Upper lobe of right lung (tissue), 1 donor: ENCODE measurements at regions of chr1 and their contacts with region 1.

Region 1: DNA sequence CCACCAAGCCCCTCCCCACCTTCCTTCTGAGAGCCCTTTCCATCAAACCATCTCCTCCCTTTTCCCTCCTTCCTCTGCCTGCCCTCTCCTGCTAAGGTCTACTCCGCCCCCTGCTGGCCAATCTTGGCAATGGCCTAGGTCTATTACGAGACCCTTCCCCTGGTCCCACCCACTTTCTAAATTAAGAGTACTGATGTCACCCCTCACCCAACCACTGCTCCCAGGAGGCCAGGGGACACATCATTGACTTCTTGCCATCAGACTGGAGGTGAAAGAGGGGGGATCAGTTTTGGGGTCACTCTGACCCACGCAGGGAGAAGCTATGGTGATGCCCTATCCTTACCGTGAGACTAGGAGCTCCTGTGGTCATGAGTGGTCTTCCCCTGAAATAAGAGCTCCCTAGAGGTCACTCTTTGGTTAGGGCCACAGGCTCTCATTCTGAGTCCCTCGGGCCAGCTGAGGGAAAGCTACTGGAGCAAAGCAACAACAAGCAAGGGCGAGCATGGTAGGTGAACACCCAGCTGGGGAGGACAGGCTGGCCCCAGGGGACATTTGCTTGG is 34.6 kb upstream of the S100A7 start:
- DNase-seq: peak; percentile 86
- ATAC-seq: peak; percentile 90
- H3K4me3 ChIP-seq: no peak overlapping the region
- H3K27ac ChIP-seq: no peak overlapping the region
- H3K4me1 ChIP-seq: no peaks in the 10 kb centered on the region
- H3K27me3 ChIP-seq: no peaks in the 10 kb centered on the region
- CTCF ChIP-seq: peak; percentile 91

Region 2: GRCh38 chr1:153220606-153221303 is 274.3 kb before region 1 on chr1:
- intact Hi-C with region 1: no loop called
- DNase-seq: no peak
- ATAC-seq: no peak
- H3K4me3 ChIP-seq: no peak overlapping the region
- H3K27ac ChIP-seq: no peak overlapping the region
- H3K4me1 ChIP-seq: no peaks in the 10 kb centered on the region
- H3K27me3 ChIP-seq: no peaks in the 10 kb centered on the region
- CTCF ChIP-seq: no peak

Region 3: DNA sequence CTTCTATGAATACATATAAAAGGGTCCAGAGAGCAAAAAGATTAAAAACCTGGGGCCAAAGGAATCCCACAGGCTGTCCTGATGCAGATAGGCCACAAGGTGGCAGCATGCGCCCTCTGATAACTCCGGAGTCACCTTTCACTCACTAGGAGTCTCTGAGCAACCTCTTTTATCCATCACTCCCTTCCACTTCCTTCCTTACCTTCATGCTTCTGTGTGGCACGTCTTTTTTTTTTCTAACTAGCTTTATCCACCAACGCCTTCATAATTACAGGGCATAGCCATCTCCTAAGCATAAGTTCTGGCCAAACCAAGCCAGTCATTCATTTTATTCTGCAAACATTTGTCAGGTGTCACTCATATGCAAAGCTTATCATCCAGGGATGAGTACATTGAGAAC is 142.5 kb before region 1 on chr1:
- intact Hi-C with region 1: loop called (anchors 5 kb)
- DNase-seq: peak; percentile 79
- ATAC-seq: peak; percentile 83
- H3K4me3 ChIP-seq: no peak overlapping the region
- H3K27ac ChIP-seq: no peak overlapping the region
- H3K4me1 ChIP-seq: peaks cover 9% of the 10 kb centered on the region
- H3K27me3 ChIP-seq: peaks cover 27% of the 10 kb centered on the region
- CTCF ChIP-seq: peak; percentile 95

Region 4: DNA sequence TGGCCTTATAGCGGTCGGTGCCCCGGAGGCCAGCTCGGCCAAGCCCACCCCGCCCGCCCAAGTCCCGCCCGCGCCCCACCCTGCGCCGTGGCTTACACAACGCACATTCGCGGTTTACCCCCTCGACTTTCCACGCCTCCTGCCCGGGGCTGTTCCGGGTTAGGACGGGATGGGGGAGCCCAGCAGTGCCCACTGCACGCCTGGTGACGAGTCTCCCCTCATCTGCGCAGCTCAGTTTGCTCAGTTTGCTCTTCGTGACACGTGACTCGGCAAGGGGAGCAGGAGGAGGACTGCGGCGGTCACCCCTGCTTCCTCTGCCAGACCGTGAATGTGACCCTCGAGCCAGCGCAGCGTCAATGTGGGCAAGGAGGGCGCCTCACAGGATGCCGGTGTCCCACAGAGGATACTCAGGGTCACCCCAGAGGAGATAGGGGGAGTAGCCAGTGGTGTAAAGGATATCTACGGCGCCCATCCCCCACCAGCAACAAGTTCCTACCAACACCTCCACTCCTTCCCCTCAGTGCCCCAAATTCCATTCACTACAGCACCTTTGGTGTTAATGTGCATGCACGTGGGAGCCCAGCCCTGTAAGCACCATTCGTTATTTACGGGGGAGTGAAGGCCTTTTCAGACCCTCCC is 41.1 kb after region 1 on chr1:
- intact Hi-C with region 1: no loop called
- DNase-seq: peak; percentile 97
- ATAC-seq: peak; percentile 85
- H3K4me3 ChIP-seq: peak overlapping the region; percentile 87
- H3K27ac ChIP-seq: peak overlapping the region; percentile 99
- H3K4me1 ChIP-seq: peaks cover 40% of the 10 kb centered on the region
- H3K27me3 ChIP-seq: no peaks in the 10 kb centered on the region
- CTCF ChIP-seq: no peak